ENCODE measurements at regions of chr21 and their contacts with region 1.

Region 1: GRCh38 chr21:34707876-34708325 is 39.1 kb downstream of the CLIC6 start:
- DNase-seq: peak; percentile 81
- ATAC-seq: peak; percentile 92
- H3K4me3 Mint-ChIP-seq: no peak overlapping the region
- H3K27ac Mint-ChIP-seq: peak overlapping the region; percentile 47
- H3K4me1 Mint-ChIP-seq: peaks cover 25% of the 10 kb centered on the region
- H3K27me3 Mint-ChIP-seq: peaks cover 80% of the 10 kb centered on the region

Region 2: DNA sequence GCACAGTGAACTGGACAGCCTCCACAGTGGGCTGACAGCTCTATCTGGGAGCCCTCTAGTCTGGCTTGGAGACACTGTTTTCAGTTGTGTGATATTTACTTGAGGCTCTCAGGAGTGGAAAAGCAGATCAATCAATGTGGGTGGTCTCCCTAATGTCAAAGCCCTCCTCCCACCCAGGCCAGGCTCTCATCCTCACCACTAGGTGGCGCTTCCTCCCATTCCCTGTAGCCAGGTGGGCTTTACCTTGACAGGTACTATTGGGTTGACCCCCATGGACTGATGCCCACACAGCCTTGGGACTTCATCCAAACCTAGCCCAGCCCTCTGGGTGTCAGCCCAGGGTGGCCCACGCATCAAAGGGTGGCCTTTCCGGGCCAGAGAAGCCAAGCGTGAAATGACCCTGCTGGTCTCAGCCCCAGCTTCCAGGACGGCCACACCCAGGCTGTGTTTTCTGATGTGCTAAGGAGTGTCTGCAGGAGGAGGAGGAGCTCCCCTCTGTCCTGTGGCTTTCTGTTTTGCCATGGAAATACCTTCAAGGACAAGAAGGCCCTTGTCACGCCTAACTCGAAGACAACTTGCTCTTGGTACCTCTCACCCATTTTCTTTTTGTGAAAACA is 14.9 kb after region 1 on chr21:
- CTCF ChIA-PET with region 1: interaction called, 25 read pairs
- DNase-seq: no peak
- ATAC-seq: no peak
- H3K4me3 Mint-ChIP-seq: no peak overlapping the region
- H3K27ac Mint-ChIP-seq: no peak overlapping the region
- H3K4me1 Mint-ChIP-seq: peaks cover 12% of the 10 kb centered on the region
- H3K27me3 Mint-ChIP-seq: peaks cover 41% of the 10 kb centered on the region

Region 3: DNA sequence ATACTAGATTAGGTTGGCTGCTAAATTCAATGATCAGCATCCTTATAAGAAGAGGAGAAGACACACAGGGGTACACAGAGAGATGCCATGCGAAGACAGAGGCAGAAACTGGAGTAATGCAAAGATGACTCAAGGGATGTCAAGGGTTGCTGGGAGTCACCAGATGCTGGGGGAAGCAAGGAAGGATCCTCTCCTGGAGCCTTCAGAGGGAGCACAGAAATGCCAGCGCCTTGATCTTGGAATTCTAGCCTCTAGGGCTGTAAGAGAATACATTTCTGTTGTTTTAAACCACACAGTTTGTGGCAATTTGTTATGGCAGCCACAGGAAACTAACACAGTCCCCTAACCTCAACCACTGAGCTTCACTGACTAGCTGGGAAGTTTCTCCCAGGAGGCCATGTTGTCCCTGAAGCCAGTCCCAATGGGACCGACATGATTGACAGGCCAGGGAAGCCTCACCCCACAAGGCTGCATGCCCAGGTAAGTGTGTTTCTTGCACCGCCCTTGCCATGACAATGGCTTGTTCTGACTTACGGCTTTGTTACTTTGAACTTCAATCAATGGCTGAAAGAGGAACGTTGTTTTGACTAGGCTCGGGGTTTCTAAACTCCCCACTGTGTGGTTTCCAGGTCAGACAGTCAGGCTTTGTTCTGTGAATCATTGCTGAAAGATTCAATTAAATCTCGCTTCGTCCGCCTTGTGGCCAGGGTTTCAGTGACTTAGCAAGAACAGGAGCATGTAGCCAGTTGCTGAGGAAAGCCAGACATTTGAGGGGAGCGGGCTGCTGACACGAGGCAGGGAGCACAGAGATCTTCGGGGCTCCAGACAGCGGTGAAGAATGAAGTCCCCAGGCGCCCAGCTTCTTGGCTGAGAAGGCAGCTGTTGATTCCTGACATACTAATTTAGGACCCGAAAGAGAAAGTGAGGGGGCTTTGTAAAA is 278.9 kb after region 1 on chr21:
- CTCF ChIA-PET with region 1: no interaction called
- DNase-seq: peak; percentile 94
- ATAC-seq: peak; percentile 41
- H3K4me3 Mint-ChIP-seq: peak overlapping the region; percentile 62
- H3K27ac Mint-ChIP-seq: peak overlapping the region; percentile 87
- H3K4me1 Mint-ChIP-seq: peaks cover 89% of the 10 kb centered on the region
- H3K27me3 Mint-ChIP-seq: no peaks in the 10 kb centered on the region

Measured in activated CD8-positive, alpha-beta memory T cell treated with anti-CD3 and anti-CD28 coated beads, Interleukin-2, amount 10 ng/mL, durations not matched to agents 7 days and 5 days (primary cell).